Activated CD4-positive, alpha-beta T cell treated with anti-CD3 and anti-CD28 coated beads for 36 hours (primary cell): ENCODE measurements at regions of chr11 and their contacts with region 1.

Region 1: GRCh38 chr11:60978546-60979380 is 7.3 kb downstream of the CD6 start:
- DNase-seq: peak; percentile 91
- ATAC-seq: peak; percentile 61
- H3K4me3 Mint-ChIP-seq: peak overlapping the region; percentile 87
- H3K27ac Mint-ChIP-seq: peak overlapping the region; percentile 95
- H3K4me1 Mint-ChIP-seq: peaks cover 74% of the 10 kb centered on the region
- H3K27me3 Mint-ChIP-seq: no peaks in the 10 kb centered on the region

Region 2: GRCh38 chr11:60992842-60993409 is 14.2 kb after region 1 on chr11:
- CTCF ChIA-PET with region 1: interaction called, 6 read pairs
- POLR2A ChIA-PET with region 1: interaction called, 26 read pairs
- intact Hi-C with region 1: loop called in 1 of 2 experiments (anchors 2 kb)
- DNase-seq: peak; percentile 18
- ATAC-seq: no peak
- H3K4me3 Mint-ChIP-seq: peak overlapping the region; percentile 61
- H3K27ac Mint-ChIP-seq: peak overlapping the region; percentile 97
- H3K4me1 Mint-ChIP-seq: peaks cover 83% of the 10 kb centered on the region
- H3K27me3 Mint-ChIP-seq: no peaks in the 10 kb centered on the region

Region 3: GRCh38 chr11:61021661-61022212 is 43.0 kb after region 1 on chr11:
- CTCF ChIA-PET with region 1: interaction called, 3 read pairs
- POLR2A ChIA-PET with region 1: interaction called, 3 read pairs
- intact Hi-C with region 1: loop called in 1 of 2 experiments (anchors 2 kb)
- DNase-seq: peak; percentile 94
- ATAC-seq: peak; percentile 50
- H3K4me3 Mint-ChIP-seq: peak overlapping the region; percentile 79
- H3K27ac Mint-ChIP-seq: peak overlapping the region; percentile 97
- H3K4me1 Mint-ChIP-seq: peaks cover 92% of the 10 kb centered on the region
- H3K27me3 Mint-ChIP-seq: no peaks in the 10 kb centered on the region